ENCODE measurements at regions of chr1 and their contacts with region 1.

Region 1: DNA sequence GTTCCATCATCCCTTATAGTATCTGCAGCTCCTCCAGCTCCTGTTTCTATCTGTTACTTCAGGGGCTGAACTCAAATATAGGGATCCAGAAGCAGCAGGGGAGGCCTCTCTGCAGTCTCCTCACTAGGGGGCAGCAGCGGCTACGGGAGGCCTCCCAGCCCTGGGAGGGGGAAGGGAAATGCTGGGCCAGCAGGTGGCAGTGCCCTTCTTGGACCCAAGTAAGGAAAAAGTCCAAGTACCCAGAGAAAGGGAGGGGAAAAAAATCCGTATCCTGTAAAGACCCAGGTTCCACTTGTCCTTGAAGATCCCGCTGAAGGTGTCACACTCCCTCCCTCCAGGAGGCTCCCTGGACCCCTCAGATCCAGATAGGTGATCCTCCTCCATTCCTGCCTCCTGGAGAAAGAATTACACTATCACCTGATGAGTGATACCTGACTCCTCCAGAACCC is 14.1 kb upstream of the NUAK2 start:
- DNase-seq: no peak
- ATAC-seq: peak; percentile 87
- H3K4me3 ChIP-seq: no peak overlapping the region
- H3K27ac ChIP-seq: no peak overlapping the region
- H3K4me1 ChIP-seq: peaks cover 6% of the 10 kb centered on the region; the same call in 1 of the 2 replicates
- H3K27me3 ChIP-seq: peaks cover 7 to 18% of the 10 kb centered on the region in 2 experiments
- CTCF ChIP-seq: peak; percentile 98 to 99 (median 99); a peak in 5 of 6 replicates
- EP300 ChIP-seq: no peak
- POLR2A ChIP-seq: no peak
- RAD21 ChIP-seq: peak; percentile 69

Region 2: GRCh38 chr1:205273551-205273982 is 62.1 kb before region 1 on chr1:
- CTCF ChIA-PET with region 1: interaction called, 2,333 read pairs
- POLR2A ChIA-PET with region 1: no interaction called
- RAD21 ChIA-PET with region 1: interaction called, 892 read pairs
- SMC1A ChIA-PET with region 1: interaction called, 1,445 read pairs
- in situ Hi-C with region 1: no loop called
- intact Hi-C with region 1: no loop called
- DNase-seq: peak; percentile 32
- ATAC-seq: peak; percentile 90
- H3K4me3 ChIP-seq: no peak overlapping the region
- H3K27ac ChIP-seq: no peak overlapping the region
- H3K4me1 ChIP-seq: peaks cover 3% of the 10 kb centered on the region; the same call in 1 of the 2 replicates
- H3K27me3 ChIP-seq: peaks cover 0 to 2% of the 10 kb centered on the region in 2 experiments; a peak in 1 of 4 replicates
- CTCF ChIP-seq: peak; percentile 92 to 98 (median 98)
- EP300 ChIP-seq: peak in 1 of 2 experiments; percentile 38; a peak in 1 of 4 replicates
- POLR2A ChIP-seq: no peak
- RAD21 ChIP-seq: peak; percentile 96

Region 3: DNA sequence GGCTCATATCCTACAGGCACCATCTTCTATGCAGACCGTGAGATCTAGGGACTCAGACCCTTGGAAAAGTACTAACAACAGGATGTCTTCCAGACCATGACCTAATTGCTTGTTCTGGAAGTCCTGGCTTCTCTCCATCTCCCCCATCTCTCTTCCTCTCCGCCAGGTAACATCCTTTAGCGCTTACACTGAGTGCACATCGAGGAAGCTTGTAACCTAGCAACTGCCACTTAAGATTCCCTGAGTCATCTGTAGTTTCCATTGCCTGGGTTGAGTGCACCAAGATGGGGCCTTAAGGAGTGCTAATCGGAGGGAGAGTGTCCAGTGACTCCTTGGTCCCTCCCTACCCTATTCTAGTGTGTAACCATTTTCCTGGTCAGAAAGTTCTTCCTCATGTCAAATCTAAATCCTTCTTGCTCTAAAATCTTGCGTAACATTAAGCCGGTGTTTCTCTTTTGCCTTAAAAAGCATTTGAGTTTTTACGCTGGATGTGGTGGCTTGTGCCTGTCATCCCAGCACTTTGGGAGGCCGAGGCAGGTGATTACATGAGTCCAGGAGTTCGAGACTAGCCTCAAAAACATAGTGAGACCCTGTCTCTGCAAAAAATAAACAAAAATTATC is 11.4 kb after region 1 on chr1:
- CTCF ChIA-PET with region 1: interaction called, 45 read pairs
- POLR2A ChIA-PET with region 1: no interaction called
- RAD21 ChIA-PET with region 1: interaction called, 6 read pairs
- SMC1A ChIA-PET with region 1: interaction called, 6 read pairs
- in situ Hi-C with region 1: no loop called
- intact Hi-C with region 1: no loop called
- DNase-seq: no peak
- ATAC-seq: no peak
- H3K4me3 ChIP-seq: no peak overlapping the region
- H3K27ac ChIP-seq: no peak overlapping the region
- H3K4me1 ChIP-seq: no peaks in the 10 kb centered on the region
- H3K27me3 ChIP-seq: peaks cover 15 to 18% of the 10 kb centered on the region in 2 experiments
- CTCF ChIP-seq: no peak
- EP300 ChIP-seq: no peak
- POLR2A ChIP-seq: no peak
- RAD21 ChIP-seq: no peak

Region 4: GRCh38 chr1:205430696-205431305 is 95.1 kb after region 1 on chr1:
- CTCF ChIA-PET with region 1: interaction called, 16 read pairs
- POLR2A ChIA-PET with region 1: interaction called, 3 read pairs
- RAD21 ChIA-PET with region 1: interaction called, 4 read pairs
- SMC1A ChIA-PET with region 1: interaction called, 5 read pairs
- in situ Hi-C with region 1: no loop called
- intact Hi-C with region 1: loop called (anchors 5 kb)
- DNase-seq: peak; percentile 13
- ATAC-seq: peak; percentile 85
- H3K4me3 ChIP-seq: peak overlapping the region; percentile 54; the same call in 1 of the 2 replicates
- H3K27ac ChIP-seq: no peak overlapping the region
- H3K4me1 ChIP-seq: peaks cover 3% of the 10 kb centered on the region
- H3K27me3 ChIP-seq: peaks cover 3 to 4% of the 10 kb centered on the region in 2 experiments; a peak in 2 of 4 replicates
- CTCF ChIP-seq: peak; percentile 53 to 85 (median 72)
- EP300 ChIP-seq: peak in 1 of 2 experiments; percentile 38; a peak in 1 of 4 replicates
- POLR2A ChIP-seq: no peak
- RAD21 ChIP-seq: peak; percentile 45

Region 5: DNA sequence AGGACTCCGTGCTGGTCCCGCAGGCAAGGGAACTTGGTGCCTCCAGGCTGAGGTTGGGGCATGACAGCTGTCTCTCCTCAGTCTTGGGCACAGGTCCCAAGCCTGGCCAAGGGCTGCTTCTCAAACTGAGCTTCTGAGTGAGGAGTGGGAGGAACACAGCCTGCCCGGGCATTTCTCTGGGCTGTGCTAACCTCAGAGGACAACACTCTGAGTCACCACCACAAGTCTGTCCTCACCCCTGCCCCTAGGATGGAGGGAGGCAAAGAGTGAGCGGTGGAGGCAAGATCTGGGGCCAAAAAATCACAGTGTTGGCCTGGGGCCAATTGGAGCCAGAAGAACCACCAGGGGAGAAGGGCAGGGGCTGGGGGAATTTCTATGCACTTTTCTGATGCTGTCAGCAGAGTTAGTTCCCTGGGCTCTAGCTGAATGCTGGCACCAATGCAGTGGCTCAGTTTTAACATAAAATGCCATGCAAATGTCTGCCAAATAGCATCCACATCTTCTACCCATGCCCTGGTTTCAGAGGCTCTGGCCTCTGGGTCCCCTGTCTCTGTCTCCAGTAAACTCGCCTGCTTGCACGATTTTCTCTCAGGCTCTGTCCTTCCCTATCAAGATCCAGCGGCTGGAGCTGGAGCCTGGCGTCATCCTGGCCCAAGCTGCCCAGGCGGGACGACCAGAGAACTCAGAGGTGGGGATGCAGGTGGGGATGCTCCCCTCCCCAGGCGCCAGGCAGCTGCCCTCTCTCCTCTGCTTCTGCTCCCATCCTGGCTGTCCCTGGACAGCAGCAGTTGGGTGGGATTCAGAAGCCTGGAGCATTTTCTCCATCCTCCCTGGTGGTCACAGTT is 157.8 kb after region 1 on chr1:
- CTCF ChIA-PET with region 1: interaction called, 102 read pairs
- POLR2A ChIA-PET with region 1: no interaction called
- RAD21 ChIA-PET with region 1: interaction called, 6 read pairs
- SMC1A ChIA-PET with region 1: interaction called, 39 read pairs
- in situ Hi-C with region 1: no loop called
- intact Hi-C with region 1: no loop called
- DNase-seq: no peak
- ATAC-seq: peak; percentile 67
- H3K4me3 ChIP-seq: no peak overlapping the region
- H3K27ac ChIP-seq: no peak overlapping the region
- H3K4me1 ChIP-seq: no peaks in the 10 kb centered on the region
- H3K27me3 ChIP-seq: peaks cover 4% of the 10 kb centered on the region in 2 experiments; a peak in 3 of 4 replicates
- CTCF ChIP-seq: no peak
- EP300 ChIP-seq: no peak
- POLR2A ChIP-seq: no peak
- RAD21 ChIP-seq: no peak

Region 6: GRCh38 chr1:205610036-205610435 is 274.4 kb after region 1 on chr1:
- CTCF ChIA-PET with region 1: no interaction called
- POLR2A ChIA-PET with region 1: no interaction called
- RAD21 ChIA-PET with region 1: no interaction called
- SMC1A ChIA-PET with region 1: no interaction called
- in situ Hi-C with region 1: no loop called
- intact Hi-C with region 1: no loop called
- DNase-seq: no peak
- ATAC-seq: no peak
- H3K4me3 ChIP-seq: no peak overlapping the region
- H3K27ac ChIP-seq: no peak overlapping the region
- H3K4me1 ChIP-seq: peaks cover 6% of the 10 kb centered on the region; the same call in 1 of the 2 replicates
- H3K27me3 ChIP-seq: no peaks in the 10 kb centered on the region
- CTCF ChIP-seq: no peak
- EP300 ChIP-seq: no peak
- POLR2A ChIP-seq: no peak
- RAD21 ChIP-seq: no peak

Measured in GM12878 (cell line).